ENCODE measurements at regions of chr11 and their contacts with region 1.

Region 1: GRCh38 chr11:122754553-122755322 is 83.6 kb upstream of the CRTAM start:
- DNase-seq: peak; percentile 63
- ATAC-seq: peak; percentile 40
- H3K4me3 Mint-ChIP-seq: no peak overlapping the region
- H3K27ac Mint-ChIP-seq: no peak overlapping the region
- H3K4me1 Mint-ChIP-seq: peaks cover 70% of the 10 kb centered on the region
- H3K27me3 Mint-ChIP-seq: no peaks in the 10 kb centered on the region
- CTCF ChIP-seq: peak; percentile 60

Region 2: GRCh38 chr11:122593473-122594420 is 161.0 kb before region 1 on chr11:
- CTCF ChIA-PET with region 1: no interaction called
- POLR2A ChIA-PET with region 1: no interaction called
- intact Hi-C with region 1: no loop called
- DNase-seq: no peak
- ATAC-seq: no peak
- H3K4me3 Mint-ChIP-seq: no peak overlapping the region
- H3K27ac Mint-ChIP-seq: no peak overlapping the region
- H3K4me1 Mint-ChIP-seq: no peaks in the 10 kb centered on the region
- H3K27me3 Mint-ChIP-seq: peaks cover 7% of the 10 kb centered on the region
- CTCF ChIP-seq: no peak

Region 3: GRCh38 chr11:122646549-122647340 is 108.0 kb before region 1 on chr11:
- CTCF ChIA-PET with region 1: interaction called, 22 read pairs
- POLR2A ChIA-PET with region 1: no interaction called
- intact Hi-C with region 1: no loop called
- DNase-seq: no peak
- ATAC-seq: no peak
- H3K4me3 Mint-ChIP-seq: no peak overlapping the region
- H3K27ac Mint-ChIP-seq: no peak overlapping the region
- H3K4me1 Mint-ChIP-seq: no peaks in the 10 kb centered on the region
- H3K27me3 Mint-ChIP-seq: no peaks in the 10 kb centered on the region
- CTCF ChIP-seq: no peak

Region 4: DNA sequence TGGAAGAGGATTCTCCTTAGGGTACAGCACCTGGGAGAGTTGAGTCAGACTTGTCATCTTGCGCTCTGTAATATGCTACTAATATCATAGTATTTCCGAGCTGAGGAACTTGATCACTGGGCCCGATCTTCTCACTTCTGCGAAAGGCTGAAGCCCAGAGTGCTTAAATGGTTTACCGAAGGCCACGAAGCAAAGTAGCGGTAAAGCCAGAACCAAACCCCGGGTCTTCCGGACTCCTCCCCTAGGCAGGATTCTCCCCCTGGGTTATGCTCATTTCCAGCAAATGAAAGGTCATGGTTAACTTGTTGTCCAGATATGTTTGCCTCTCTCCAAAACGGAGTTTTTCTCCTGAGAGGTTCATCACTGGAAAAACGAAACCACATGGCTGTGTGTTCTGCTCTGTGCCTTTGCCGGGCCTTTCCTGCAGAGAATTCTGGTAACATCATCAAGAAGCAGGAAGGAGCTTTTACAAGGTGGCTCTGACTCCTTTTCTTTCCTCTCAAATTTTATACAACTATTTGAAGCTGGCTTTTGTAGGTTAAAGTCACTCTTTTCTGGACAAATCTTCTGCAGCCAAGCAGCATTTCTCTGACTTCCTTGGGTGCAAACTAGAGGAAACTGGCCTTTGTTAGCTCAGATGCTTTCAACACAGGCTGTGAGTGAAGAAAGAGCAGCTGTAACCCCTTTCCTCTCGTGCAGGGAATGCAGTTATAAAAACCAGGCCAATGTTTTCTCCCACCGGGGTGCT is 63.8 kb before region 1 on chr11:
- CTCF ChIA-PET with region 1: interaction called, 25 read pairs
- POLR2A ChIA-PET with region 1: interaction called, 6 read pairs
- intact Hi-C with region 1: loop called (anchors 5 kb)
- DNase-seq: no peak
- ATAC-seq: peak; percentile 17
- H3K4me3 Mint-ChIP-seq: peak overlapping the region; percentile 65
- H3K27ac Mint-ChIP-seq: peak overlapping the region; percentile 66
- H3K4me1 Mint-ChIP-seq: peaks cover 80% of the 10 kb centered on the region
- H3K27me3 Mint-ChIP-seq: no peaks in the 10 kb centered on the region
- CTCF ChIP-seq: no peak

Region 5: GRCh38 chr11:122727101-122727929 is 27.4 kb before region 1 on chr11:
- CTCF ChIA-PET with region 1: interaction called, 19 read pairs
- POLR2A ChIA-PET with region 1: interaction called, 6 read pairs
- intact Hi-C with region 1: loop called (anchors 5 kb)
- DNase-seq: peak; percentile 68
- ATAC-seq: peak; percentile 49
- H3K4me3 Mint-ChIP-seq: peak overlapping the region; percentile 69
- H3K27ac Mint-ChIP-seq: peak overlapping the region; percentile 93
- H3K4me1 Mint-ChIP-seq: peaks cover 72% of the 10 kb centered on the region
- H3K27me3 Mint-ChIP-seq: no peaks in the 10 kb centered on the region
- CTCF ChIP-seq: no peak

Region 6: DNA sequence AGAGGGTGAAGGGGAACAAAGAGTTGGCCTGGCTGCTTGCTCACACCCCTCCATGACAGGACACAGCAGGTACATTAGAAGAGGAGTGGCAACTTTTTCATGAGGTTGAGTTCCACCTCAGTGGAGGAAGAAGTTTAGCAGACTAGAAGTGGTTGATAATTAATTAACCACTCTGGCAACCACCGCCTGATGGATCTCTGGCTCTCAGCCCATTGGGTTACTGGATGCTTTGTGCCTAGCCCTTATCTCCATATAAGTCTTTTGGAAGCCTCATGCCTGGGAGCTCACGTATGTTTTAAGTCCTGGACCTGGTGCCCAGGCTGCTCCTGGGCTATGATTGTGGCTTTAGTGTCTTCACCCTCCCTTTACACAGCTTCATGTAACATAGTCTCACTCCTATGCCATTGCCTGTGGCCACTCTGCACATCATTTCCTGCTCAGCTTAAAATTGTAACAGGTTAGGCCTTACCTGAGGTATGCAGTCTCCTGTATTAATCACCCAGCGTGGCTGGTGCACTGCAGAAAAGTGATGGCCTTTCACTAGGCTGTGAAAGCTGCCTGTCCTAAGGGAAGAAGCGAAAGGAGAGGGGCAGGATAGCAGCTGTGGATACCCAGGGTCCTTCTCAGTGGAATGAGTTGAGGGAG is 10.9 kb after region 1 on chr11:
- CTCF ChIA-PET with region 1: interaction called, 17 read pairs
- POLR2A ChIA-PET with region 1: interaction called, 4 read pairs
- intact Hi-C with region 1: no loop called
- DNase-seq: no peak
- ATAC-seq: no peak
- H3K4me3 Mint-ChIP-seq: no peak overlapping the region
- H3K27ac Mint-ChIP-seq: peak overlapping the region; percentile 30
- H3K4me1 Mint-ChIP-seq: peaks cover 4% of the 10 kb centered on the region
- H3K27me3 Mint-ChIP-seq: no peaks in the 10 kb centered on the region
- CTCF ChIP-seq: no peak

Region 7: DNA sequence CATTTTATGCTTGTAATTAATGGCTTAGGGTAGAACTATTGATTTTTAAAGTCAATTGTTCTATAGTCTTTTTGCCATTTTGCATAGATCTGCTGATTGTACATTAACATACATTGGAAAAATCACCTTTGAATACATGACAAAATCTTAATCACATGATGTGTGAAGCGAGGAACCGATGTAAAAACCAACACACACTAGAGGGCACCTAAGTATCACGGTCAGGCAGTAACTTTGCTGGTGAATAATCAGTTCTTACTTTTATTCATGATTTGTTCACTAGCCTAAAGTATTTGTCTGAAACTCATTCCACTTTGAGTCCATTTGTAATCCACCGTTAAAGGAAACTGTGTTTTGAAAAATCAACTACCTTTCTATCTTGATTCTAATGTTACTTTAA is 156.0 kb after region 1 on chr11:
- CTCF ChIA-PET with region 1: no interaction called
- POLR2A ChIA-PET with region 1: no interaction called
- intact Hi-C with region 1: no loop called
- DNase-seq: peak; percentile 27
- ATAC-seq: no peak
- H3K4me3 Mint-ChIP-seq: no peak overlapping the region
- H3K27ac Mint-ChIP-seq: no peak overlapping the region
- H3K4me1 Mint-ChIP-seq: no peaks in the 10 kb centered on the region
- H3K27me3 Mint-ChIP-seq: no peaks in the 10 kb centered on the region
- CTCF ChIP-seq: peak; percentile 41